ENCODE measurements at regions of chr2 and their contacts with region 1.

Region 1: DNA sequence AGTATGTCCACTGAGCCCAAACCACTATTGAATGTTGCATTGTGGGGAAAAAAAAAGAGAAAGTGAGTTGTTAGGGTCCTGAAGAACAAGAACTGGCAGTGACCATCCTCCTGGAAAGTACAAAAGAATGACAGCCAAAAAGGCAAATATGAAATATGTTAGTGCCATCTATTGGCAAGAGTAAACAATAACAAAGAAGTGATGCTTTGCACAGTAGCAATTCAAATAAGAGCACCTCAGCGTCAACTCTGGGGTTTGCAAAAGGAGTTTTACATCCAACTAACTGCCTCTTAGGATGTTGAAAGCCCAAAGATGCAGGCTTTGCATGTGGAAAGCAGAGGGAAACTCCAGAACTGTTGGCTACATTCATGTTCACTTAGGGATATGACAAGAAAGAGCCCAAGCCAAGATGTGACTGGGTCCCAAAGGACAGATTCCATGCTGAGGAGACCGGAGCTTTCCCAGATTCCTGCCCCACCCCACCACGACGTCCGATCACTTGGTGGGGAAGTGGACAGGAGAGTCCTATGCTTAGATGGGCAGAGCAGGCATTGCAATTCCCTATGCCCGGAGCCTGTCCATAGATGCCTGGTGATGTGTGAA is 15.6 kb downstream of the TRABD2A start:
- DNase-seq: peak; percentile 51
- ATAC-seq: peak; percentile 49
- H3K4me3 ChIP-seq: no peak overlapping the region
- H3K4me3 Mint-ChIP-seq: no peak overlapping the region
- H3K27ac ChIP-seq: no peak overlapping the region
- H3K27ac Mint-ChIP-seq: no peak overlapping the region
- H3K4me1 ChIP-seq: peaks cover 3 to 9% of the 10 kb centered on the region in 2 donors
- H3K4me1 Mint-ChIP-seq: peaks cover 8% of the 10 kb centered on the region
- H3K27me3 ChIP-seq: no peaks in the 10 kb centered on the region
- H3K27me3 Mint-ChIP-seq: no peaks in the 10 kb centered on the region
- CTCF ChIP-seq: peak; percentile 66

Region 2: DNA sequence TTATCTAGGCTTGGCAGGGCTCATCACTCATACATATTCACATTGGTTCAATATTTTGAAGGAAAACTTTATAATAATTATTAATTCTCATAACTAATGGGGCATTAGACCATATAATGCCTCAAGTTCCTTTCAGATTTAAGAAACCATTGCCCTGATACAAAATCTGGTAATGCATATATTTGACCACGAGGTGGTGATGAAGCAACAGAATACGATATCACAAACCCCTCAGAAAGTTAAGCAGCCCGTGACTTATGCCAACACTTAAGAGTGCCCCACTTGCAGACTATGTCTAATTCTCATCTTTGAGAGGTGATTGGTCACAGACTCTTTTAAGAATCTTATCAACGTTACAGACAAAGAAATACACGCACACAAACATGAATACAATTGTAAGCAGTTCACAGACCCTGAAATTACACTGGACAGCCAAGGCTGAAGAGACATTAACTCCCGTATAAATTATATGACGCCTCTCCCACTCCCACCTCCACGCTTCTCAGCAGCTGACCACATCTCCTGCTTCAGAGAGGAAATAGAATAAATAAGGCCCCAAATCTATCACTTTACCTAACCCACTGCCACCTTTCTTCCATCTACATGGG is 369.6 kb before region 1 on chr2:
- CTCF ChIA-PET with region 1: interaction called, 7 read pairs
- POLR2A ChIA-PET with region 1: no interaction called
- intact Hi-C with region 1: loop called (anchors 1 kb)
- DNase-seq: peak; percentile 81
- ATAC-seq: peak; percentile 89
- H3K4me3 ChIP-seq: no peak overlapping the region
- H3K4me3 Mint-ChIP-seq: no peak overlapping the region
- H3K27ac ChIP-seq: no peak overlapping the region
- H3K27ac Mint-ChIP-seq: no peak overlapping the region
- H3K4me1 ChIP-seq: no peaks in the 10 kb centered on the region
- H3K4me1 Mint-ChIP-seq: no peaks in the 10 kb centered on the region
- H3K27me3 ChIP-seq: no peaks in the 10 kb centered on the region
- H3K27me3 Mint-ChIP-seq: no peaks in the 10 kb centered on the region
- CTCF ChIP-seq: peak; percentile 83